ENCODE measurements at regions of chr1 and their contacts with region 1.

Region 1: GRCh38 chr1:209207701-209208286 is 375.7 kb upstream of the CAMK1G start:
- DNase-seq: no peak

Region 2: DNA sequence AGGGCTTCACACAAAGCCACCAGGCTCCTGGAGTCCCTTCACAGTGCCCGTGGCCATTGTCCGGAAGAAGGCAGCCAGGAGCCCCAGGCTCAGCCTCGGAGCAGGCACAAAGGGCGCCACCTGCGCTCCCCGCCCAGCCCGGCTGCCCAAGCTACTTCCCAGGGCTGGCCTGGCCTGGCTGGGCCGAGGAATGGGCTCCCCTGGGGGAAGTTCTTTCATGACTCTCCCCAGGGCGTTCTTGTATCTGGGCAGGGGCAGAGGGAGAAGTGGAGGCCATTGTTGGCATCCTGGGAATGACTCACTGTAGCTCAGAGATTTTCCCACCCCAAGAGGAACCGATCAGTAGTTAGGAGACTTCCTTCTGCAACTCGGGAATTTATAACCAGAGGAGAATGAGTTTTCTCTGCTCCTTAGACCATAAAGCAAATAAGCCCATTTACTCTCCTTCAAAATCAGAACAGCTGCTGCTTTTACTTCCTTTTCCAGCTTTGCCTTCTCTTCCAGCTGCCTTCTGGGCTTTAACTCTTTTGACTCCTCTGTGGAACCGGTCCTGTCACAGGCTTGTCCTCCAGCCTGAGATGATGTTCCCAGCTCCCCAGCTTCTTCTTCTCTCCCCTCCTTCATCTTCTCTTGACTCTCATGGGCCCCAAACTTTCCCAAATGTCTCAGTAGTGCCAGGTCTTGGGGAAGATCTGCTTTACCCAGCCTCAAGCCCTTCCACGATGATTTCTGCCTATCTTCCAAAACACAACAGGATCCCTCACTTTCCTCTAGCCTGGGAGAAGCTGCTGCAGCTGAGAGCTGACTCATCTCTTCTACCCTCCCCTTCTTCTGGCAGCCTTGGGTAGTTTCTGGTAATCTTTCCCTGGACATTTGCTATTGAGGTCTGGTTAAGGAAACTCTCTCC is 1178.2 kb before region 1 on chr1:
- intact Hi-C with region 1: loop called (anchors 10 kb)
- DNase-seq: peak; percentile 63

Region 3: DNA sequence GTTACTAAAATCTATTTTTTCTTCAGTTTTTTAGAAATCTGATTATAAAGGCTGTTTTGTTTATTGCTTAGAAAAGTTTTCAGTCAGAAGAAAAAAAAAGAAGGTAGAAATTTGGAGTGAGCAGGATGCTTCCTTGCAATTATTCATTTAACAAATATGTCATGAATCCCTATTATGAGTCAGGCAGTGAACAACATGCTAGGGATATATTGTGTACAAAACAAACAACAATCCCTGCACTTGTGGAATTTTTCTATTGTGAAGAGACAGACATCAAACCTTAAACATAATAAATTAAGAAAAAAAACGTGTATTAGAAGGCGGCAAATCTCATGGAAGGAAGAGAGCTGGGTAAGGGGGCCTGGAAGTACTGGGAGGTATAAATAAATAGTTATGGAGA is 288.4 kb before region 1 on chr1:
- intact Hi-C with region 1: no loop called
- DNase-seq: no peak

Region 4: GRCh38 chr1:209513226-209513625 is 305.4 kb after region 1 on chr1:
- intact Hi-C with region 1: loop called (anchors 10 kb)
- DNase-seq: no peak

Measured in cardiac septum (tissue), 1 donor.